Head of caudate nucleus (tissue), 42 donors: ENCODE measurements at regions of chr19 and their contacts with region 1.

Region 1: DNA sequence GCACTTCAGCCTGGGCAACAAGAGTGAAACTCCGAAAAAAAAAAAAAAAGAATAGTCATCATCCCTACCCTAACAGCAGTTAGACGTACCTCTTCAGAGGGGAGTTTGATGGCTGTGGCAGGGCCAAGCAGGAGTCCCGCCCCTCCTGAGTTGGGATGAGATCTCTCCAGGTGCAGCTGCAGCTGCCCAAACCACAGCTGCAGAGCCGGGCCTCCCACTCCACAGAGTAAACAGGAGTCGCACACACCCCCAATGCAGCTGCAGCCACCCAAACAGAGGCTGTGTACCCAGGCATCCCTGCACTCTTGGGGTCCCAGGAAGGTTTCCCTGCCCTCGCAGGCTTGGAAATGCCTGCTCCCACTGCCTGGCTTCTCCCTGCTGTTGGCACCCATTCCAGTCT is 17.4 kb upstream of the MLLT1 start:
- DNase-seq: no peak

Region 2: DNA sequence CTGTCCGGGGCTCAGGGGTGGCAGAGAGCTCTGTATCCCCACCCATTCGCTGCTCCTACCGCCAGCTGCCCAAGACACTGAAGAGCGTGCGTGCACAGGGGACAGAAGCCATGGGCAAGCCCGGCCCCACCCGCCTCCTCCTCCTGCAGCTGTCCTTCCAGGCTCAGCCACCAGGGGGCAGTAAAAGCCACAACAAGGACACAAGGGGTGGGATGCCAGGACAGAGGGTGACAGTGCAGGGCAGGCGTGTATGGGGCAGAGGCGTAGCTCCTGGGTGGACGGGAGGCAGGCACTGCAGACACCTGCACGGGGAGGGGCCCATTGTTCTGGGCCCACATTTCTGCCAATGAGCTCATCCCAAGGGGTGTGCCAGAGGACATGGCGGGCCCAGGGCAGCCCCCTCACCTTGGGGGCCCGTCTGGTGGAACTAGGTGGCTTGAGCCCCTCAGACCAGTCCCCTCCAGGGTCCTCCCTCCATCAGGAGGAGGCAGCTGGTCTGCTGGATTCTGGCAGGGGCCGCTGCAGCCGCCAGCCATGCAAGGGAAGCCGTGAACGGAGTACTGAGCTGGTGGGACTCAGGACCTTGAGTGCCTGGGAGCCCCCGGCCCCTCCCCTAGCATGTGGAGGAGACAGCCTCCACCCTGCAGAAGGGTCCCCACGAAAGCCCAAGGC is 78.6 kb before region 1 on chr19:
- intact Hi-C with region 1: loop called (anchors 5 kb)
- DNase-seq: peak; percentile 73 to 97 (median 90)